Naive thymus-derived CD4-positive, alpha-beta T cell (primary cell): ENCODE measurements at regions of chr11 and their contacts with region 1.

Region 1: DNA sequence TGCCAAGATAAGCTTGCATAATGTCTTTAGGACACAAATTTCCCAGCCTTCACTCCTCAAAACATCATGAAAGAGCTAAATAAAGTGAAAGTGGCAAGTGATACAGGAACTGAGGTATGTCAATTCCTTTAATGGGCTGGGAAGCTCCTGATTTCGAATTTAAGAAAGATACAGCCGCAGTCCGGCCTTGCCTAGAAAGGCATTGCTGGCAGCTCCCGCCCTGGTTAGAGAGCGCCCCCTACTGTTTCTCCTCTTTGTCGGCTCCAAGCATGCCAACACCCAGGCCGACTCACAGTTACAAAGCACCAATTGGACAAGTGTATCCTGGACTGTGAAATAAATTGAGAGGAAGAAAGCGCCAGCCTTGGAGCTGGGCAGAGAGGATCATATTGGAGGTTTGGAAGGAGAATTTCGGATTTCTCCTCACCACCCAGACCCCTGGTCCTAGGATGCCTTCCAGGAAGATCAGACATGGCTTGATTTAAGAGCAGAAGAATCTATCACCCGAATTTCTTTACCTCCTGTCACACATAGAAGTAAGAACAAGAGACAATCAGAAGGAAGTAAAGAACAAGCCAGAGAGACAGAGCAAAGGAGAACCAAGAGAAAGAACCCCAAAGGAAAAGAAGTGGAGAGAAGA is 84.0 kb downstream of the FAM76B start:
- DNase-seq: peak; percentile 67 to 91 (median 86)
- ATAC-seq: peak; percentile 98
- H3K4me3 ChIP-seq: no peak overlapping the region
- H3K4me3 Mint-ChIP-seq: no peak overlapping the region
- H3K27ac ChIP-seq: peak overlapping the region; percentile 55
- H3K27ac Mint-ChIP-seq: no peak overlapping the region
- H3K4me1 ChIP-seq: peaks cover 29 to 43% of the 10 kb centered on the region in 2 donors
- H3K4me1 Mint-ChIP-seq: peaks cover 3 to 15% (median 11%) of the 10 kb centered on the region in 7 donors
- H3K27me3 ChIP-seq: no peaks in the 10 kb centered on the region
- H3K27me3 Mint-ChIP-seq: peaks cover 0 to 3% (median 0%) of the 10 kb centered on the region in 5 donors

Region 2: DNA sequence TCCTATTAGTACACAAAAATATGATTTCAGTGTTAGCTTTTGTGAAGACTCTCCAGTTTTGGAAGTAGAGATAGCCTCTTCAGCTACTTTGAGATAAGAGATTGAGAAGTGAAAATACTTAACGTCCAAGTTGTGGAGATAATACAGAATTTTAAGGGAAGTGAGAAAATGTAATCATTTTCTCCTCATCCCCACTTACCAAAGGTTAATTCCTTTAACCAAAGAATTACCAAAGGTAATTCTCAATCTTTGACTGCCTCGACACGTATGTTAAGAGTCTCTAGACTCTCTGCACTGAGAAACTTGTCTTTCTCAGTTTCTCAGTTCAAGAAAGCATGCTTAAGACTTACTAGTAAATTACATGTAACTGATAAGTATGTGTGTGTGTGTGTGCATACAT is 1948.9 kb before region 1 on chr11:
- CTCF ChIA-PET with region 1: no interaction called
- POLR2A ChIA-PET with region 1: no interaction called
- intact Hi-C with region 1: no loop called
- DNase-seq: no peak
- ATAC-seq: no peak
- H3K4me3 ChIP-seq: no peak overlapping the region
- H3K4me3 Mint-ChIP-seq: no peak overlapping the region
- H3K27ac ChIP-seq: no peak overlapping the region
- H3K27ac Mint-ChIP-seq: no peak overlapping the region
- H3K4me1 ChIP-seq: no peaks in the 10 kb centered on the region
- H3K4me1 Mint-ChIP-seq: peaks cover 0 to 6% (median 0%) of the 10 kb centered on the region in 7 donors
- H3K27me3 ChIP-seq: no peaks in the 10 kb centered on the region
- H3K27me3 Mint-ChIP-seq: no peaks in the 10 kb centered on the region

Region 3: DNA sequence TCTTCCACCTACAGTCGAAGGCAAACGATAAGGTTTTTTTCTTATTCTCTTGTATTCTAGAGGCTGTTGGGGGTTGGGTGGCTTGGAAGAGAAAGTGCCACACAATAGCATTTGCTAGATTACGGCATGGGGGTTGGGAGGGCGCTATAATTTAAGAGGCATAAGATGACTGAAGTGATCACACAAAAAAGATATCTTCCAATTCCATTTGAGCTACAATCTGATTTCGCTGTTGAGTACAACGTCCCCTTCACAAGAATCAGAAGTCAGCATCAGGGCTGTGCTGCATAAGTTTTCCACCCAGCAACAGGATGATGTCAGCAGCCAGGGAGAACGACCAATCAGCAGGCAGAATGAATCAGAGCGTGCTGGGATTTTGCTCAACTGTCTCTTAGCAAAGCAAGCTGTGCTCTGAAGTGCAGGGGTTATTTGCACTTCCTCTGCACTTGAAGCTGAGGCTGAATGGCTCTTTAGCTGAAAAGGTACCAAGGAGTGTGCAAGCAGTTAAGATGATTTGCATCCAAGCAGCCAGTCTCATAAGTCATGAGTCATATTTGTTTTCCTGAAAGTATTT is 451.4 kb before region 1 on chr11:
- CTCF ChIA-PET with region 1: interaction called, 11 read pairs
- POLR2A ChIA-PET with region 1: interaction called, 6 read pairs
- intact Hi-C with region 1: loop called in 1 of 2 experiments (anchors 1 kb)
- DNase-seq: peak; percentile 45 to 91 (median 84)
- ATAC-seq: peak; percentile 98
- H3K4me3 ChIP-seq: peak overlapping the region; percentile 52
- H3K4me3 Mint-ChIP-seq: peak overlapping the region; percentile 74 to 98 (median 89)
- H3K27ac ChIP-seq: peak overlapping the region; percentile 71
- H3K27ac Mint-ChIP-seq: peak overlapping the region; percentile 81 to 98 (median 90)
- H3K4me1 ChIP-seq: peaks cover 13 to 31% of the 10 kb centered on the region in 2 donors
- H3K4me1 Mint-ChIP-seq: peaks cover 20 to 59% (median 53%) of the 10 kb centered on the region in 7 donors
- H3K27me3 ChIP-seq: no peaks in the 10 kb centered on the region
- H3K27me3 Mint-ChIP-seq: no peaks in the 10 kb centered on the region

Region 4: GRCh38 chr11:95337175-95337957 is 368.2 kb before region 1 on chr11:
- CTCF ChIA-PET with region 1: interaction called, 3 read pairs
- POLR2A ChIA-PET with region 1: interaction called, 3 read pairs
- intact Hi-C with region 1: loop called (anchors 2 to 5 kb)
- DNase-seq: peak; percentile 12 to 55 (median 39)
- ATAC-seq: peak; percentile 69
- H3K4me3 ChIP-seq: peak overlapping the region; percentile 36
- H3K4me3 Mint-ChIP-seq: no peak overlapping the region
- H3K27ac ChIP-seq: peak overlapping the region; percentile 59
- H3K27ac Mint-ChIP-seq: no peak overlapping the region
- H3K4me1 ChIP-seq: peaks cover 4 to 20% of the 10 kb centered on the region in 2 donors
- H3K4me1 Mint-ChIP-seq: peaks cover 0 to 12% (median under 1%) of the 10 kb centered on the region in 7 donors
- H3K27me3 ChIP-seq: no peaks in the 10 kb centered on the region
- H3K27me3 Mint-ChIP-seq: no peaks in the 10 kb centered on the region

Region 5: DNA sequence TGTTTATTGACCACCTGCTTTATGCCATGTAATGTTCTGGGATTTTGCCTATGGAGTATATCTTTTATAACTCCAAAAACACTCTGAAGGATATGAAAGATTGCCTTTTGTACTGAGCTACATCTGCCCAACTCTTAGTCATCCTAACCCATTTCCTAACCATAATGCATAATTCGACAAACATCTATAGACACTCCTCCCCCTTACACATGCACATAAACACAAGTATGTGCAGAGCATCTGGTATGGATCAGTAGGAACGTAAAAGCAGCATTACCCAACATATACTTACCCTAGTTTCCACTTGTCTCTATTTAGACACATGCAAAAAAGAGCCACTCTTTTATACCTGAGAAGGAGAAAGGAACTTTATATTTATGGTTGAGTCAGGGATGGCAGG is 188.8 kb before region 1 on chr11:
- CTCF ChIA-PET with region 1: no interaction called
- POLR2A ChIA-PET with region 1: no interaction called
- intact Hi-C with region 1: loop called in 1 of 2 experiments (anchors 5 kb)
- DNase-seq: no peak
- ATAC-seq: no peak
- H3K4me3 ChIP-seq: no peak overlapping the region
- H3K4me3 Mint-ChIP-seq: no peak overlapping the region
- H3K27ac ChIP-seq: no peak overlapping the region
- H3K27ac Mint-ChIP-seq: no peak overlapping the region
- H3K4me1 ChIP-seq: no peaks in the 10 kb centered on the region
- H3K4me1 Mint-ChIP-seq: peaks cover 0 to 5% (median 0%) of the 10 kb centered on the region in 7 donors
- H3K27me3 ChIP-seq: no peaks in the 10 kb centered on the region
- H3K27me3 Mint-ChIP-seq: no peaks in the 10 kb centered on the region

Region 6: DNA sequence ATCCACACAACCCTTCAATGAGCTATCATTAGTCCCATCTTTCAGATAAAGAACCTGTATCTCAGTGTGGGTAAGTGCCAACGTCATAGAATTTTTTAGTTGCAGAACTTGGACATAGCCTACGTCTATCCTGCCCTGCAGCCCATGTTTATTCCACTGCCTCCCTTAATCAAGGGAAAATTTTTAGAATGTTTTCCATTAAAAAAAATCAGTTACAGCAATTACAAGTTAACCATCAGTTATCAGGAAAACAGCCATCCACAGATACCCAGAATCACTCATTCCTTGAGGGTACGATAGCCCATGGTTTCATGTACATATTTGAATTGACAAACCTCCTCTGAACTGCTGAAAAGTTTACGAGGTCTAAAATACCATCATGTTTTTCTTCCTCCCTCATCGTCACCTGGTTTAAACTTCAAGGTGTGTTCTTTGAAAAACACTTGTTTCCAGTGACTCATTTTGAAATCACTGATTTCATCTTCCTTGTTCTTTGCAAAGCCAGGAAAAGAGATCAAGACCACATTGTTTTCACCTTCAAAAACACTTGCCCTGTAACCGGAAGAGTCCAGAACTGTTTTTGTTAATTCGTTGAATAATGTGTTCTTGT is 16.9 kb before region 1 on chr11:
- CTCF ChIA-PET with region 1: interaction called, 18 read pairs
- POLR2A ChIA-PET with region 1: interaction called, 44 read pairs
- intact Hi-C with region 1: loop called (anchors 1 to 2 kb)
- DNase-seq: peak in 7 of 9 donors; percentile 48 to 84 (median 70)
- ATAC-seq: peak; percentile 79
- H3K4me3 ChIP-seq: no peak overlapping the region
- H3K4me3 Mint-ChIP-seq: no peak overlapping the region
- H3K27ac ChIP-seq: peak overlapping the region; percentile 73
- H3K27ac Mint-ChIP-seq: no peak overlapping the region
- H3K4me1 ChIP-seq: peaks cover 25 to 68% of the 10 kb centered on the region in 2 donors
- H3K4me1 Mint-ChIP-seq: peaks cover 8 to 44% (median 35%) of the 10 kb centered on the region in 7 donors
- H3K27me3 ChIP-seq: no peaks in the 10 kb centered on the region
- H3K27me3 Mint-ChIP-seq: no peaks in the 10 kb centered on the region

Region 7: DNA sequence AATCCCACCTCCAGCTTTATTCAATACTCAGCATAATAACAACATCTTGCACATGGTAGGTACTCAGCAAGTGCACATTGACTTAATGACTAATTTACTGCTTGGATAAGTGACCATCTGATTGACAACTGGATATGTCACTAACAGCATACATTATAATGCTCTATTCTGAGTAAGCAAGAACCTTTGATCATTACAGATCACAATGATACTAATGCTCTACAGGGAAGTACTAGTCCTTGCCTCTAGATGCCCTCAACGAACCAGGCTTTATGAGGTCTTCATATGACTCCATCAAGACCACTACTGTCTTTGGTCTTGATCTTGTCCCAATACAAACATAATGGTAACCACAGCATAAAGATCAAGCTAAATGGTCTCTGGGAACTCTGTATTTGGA is 385.9 kb after region 1 on chr11:
- CTCF ChIA-PET with region 1: no interaction called
- POLR2A ChIA-PET with region 1: no interaction called
- intact Hi-C with region 1: no loop called
- DNase-seq: peak in 7 of 9 donors; percentile 10 to 46 (median 23)
- ATAC-seq: peak; percentile 88
- H3K4me3 ChIP-seq: no peak overlapping the region
- H3K4me3 Mint-ChIP-seq: peak overlapping the region in 1 of 10 donors; percentile 6
- H3K27ac ChIP-seq: no peak overlapping the region
- H3K27ac Mint-ChIP-seq: peak overlapping the region in 5 of 9 donors; percentile 56 to 81 (median 71)
- H3K4me1 ChIP-seq: peaks cover 0 to 5% of the 10 kb centered on the region in 2 donors
- H3K4me1 Mint-ChIP-seq: peaks cover 30 to 95% (median 59%) of the 10 kb centered on the region in 7 donors
- H3K27me3 ChIP-seq: no peaks in the 10 kb centered on the region
- H3K27me3 Mint-ChIP-seq: no peaks in the 10 kb centered on the region

Region 8: GRCh38 chr11:96424693-96425092 is 719.1 kb after region 1 on chr11:
- CTCF ChIA-PET with region 1: no interaction called
- POLR2A ChIA-PET with region 1: no interaction called
- intact Hi-C with region 1: loop called in 1 of 2 experiments (anchors 2 kb)
- DNase-seq: no peak
- ATAC-seq: no peak
- H3K4me3 ChIP-seq: no peak overlapping the region
- H3K4me3 Mint-ChIP-seq: no peak overlapping the region
- H3K27ac ChIP-seq: no peak overlapping the region
- H3K27ac Mint-ChIP-seq: no peak overlapping the region
- H3K4me1 ChIP-seq: no peaks in the 10 kb centered on the region
- H3K4me1 Mint-ChIP-seq: peaks cover 0 to 6% (median 0%) of the 10 kb centered on the region in 7 donors
- H3K27me3 ChIP-seq: peaks cover 0 to 3% of the 10 kb centered on the region in 2 donors
- H3K27me3 Mint-ChIP-seq: peaks cover 27 to 49% (median 44%) of the 10 kb centered on the region in 5 donors